Activated CD8-positive, alpha-beta T cell treated with anti-CD3 and anti-CD28 coated beads for 36 hours (primary cell): ENCODE measurements at regions of chr1 and their contacts with region 1.

Region 1: GRCh38 chr1:24443241-24443656 is 27.6 kb downstream of the NIPAL3 start:
- DNase-seq: no peak
- ATAC-seq: no peak
- H3K4me3 Mint-ChIP-seq: no peak overlapping the region
- H3K27ac Mint-ChIP-seq: no peak overlapping the region
- H3K4me1 Mint-ChIP-seq: peaks cover 3% of the 10 kb centered on the region
- H3K27me3 Mint-ChIP-seq: no peaks in the 10 kb centered on the region
- CTCF ChIP-seq: no peak

Region 2: DNA sequence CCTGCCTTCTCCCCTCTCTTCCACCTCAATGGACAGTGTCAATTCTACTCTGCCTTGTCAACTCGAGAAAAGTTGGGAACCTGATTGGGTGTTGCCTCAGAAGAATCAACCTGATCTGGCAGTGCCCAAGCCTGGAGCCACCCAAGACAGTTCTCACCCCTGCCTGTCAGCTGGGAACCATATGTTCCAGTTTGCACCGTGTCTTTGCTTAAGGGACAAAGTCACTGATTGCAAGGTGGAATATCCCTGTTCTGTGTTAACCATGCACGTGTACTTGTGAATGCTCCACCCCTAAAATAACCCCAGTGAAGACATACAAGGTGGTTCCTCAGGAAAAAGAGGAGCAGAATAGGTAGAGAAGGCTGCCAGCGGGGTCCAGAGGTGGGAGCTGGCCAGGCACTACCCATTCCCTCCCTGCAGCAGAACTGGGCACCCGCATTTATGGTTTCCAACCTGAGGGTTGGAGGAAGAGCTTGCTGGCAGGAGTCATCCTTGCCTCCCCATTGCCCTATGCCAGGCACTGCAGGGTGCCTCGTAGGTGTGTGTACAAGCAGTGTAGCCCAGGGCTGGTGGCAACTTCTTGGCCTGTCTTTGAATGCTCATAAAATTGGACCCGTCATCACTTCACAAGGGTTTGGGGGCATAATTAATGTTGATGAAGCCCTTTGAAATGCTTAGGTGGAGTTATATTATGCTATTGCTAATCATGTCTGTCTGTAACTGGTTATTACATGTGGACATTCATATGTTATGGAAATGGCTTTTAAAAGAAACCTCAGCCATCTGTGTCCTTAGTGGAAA is 16.3 kb before region 1 on chr1:
- CTCF ChIA-PET with region 1: interaction called, 3 read pairs
- POLR2A ChIA-PET with region 1: interaction called, 12 read pairs
- intact Hi-C with region 1: no loop called
- DNase-seq: no peak
- ATAC-seq: no peak
- H3K4me3 Mint-ChIP-seq: no peak overlapping the region
- H3K27ac Mint-ChIP-seq: no peak overlapping the region
- H3K4me1 Mint-ChIP-seq: peaks cover 38% of the 10 kb centered on the region
- H3K27me3 Mint-ChIP-seq: no peaks in the 10 kb centered on the region
- CTCF ChIP-seq: no peak